CD14-positive monocyte (primary cell): ENCODE measurements at regions of chr11 and their contacts with region 1.

Region 1: GRCh38 chr11:59097113-59097708 is 9.8 kb upstream of the FAM111B start:
- DNase-seq: peak; percentile 52 to 67 (median 55)
- H3K4me3 ChIP-seq: no peak overlapping the region
- H3K4me3 Mint-ChIP-seq: no peak overlapping the region
- H3K27ac ChIP-seq: no peak overlapping the region
- H3K27ac Mint-ChIP-seq: no peak overlapping the region
- H3K4me1 ChIP-seq: peaks cover 7% of the 10 kb centered on the region in 2 donors
- H3K4me1 Mint-ChIP-seq: peaks cover 9% of the 10 kb centered on the region
- H3K27me3 ChIP-seq: no peaks in the 10 kb centered on the region
- H3K27me3 Mint-ChIP-seq: peaks cover 0 to 3% (median 1%) of the 10 kb centered on the region in 3 donors
- CTCF ChIP-seq: peak; percentile 78

Region 2: GRCh38 chr11:59158206-59159068 is 61.2 kb after region 1 on chr11:
- intact Hi-C with region 1: loop called (anchors 5 kb)
- DNase-seq: peak; percentile 72 to 86 (median 81)
- H3K4me3 ChIP-seq: peak overlapping the region in 2 of 3 experiments; percentile 57 to 58
- H3K4me3 Mint-ChIP-seq: peak overlapping the region; percentile 66 to 80
- H3K27ac ChIP-seq: peak overlapping the region in 1 of 2 donors; percentile 51
- H3K27ac Mint-ChIP-seq: peak overlapping the region; percentile 55 to 87 (median 80)
- H3K4me1 ChIP-seq: peaks cover 14 to 17% of the 10 kb centered on the region in 2 donors
- H3K4me1 Mint-ChIP-seq: peaks cover 17% of the 10 kb centered on the region
- H3K27me3 ChIP-seq: no peaks in the 10 kb centered on the region
- H3K27me3 Mint-ChIP-seq: peaks cover 0 to 2% (median 1%) of the 10 kb centered on the region in 3 donors
- CTCF ChIP-seq: peak; percentile 91

Region 3: GRCh38 chr11:59394186-59394585 is 297.0 kb after region 1 on chr11:
- intact Hi-C with region 1: no loop called
- DNase-seq: no peak
- H3K4me3 ChIP-seq: no peak overlapping the region
- H3K4me3 Mint-ChIP-seq: no peak overlapping the region
- H3K27ac ChIP-seq: no peak overlapping the region
- H3K27ac Mint-ChIP-seq: no peak overlapping the region
- H3K4me1 ChIP-seq: no peaks in the 10 kb centered on the region
- H3K4me1 Mint-ChIP-seq: no peaks in the 10 kb centered on the region
- H3K27me3 ChIP-seq: no peaks in the 10 kb centered on the region
- H3K27me3 Mint-ChIP-seq: peaks cover 0 to 1% (median 0%) of the 10 kb centered on the region in 3 donors
- CTCF ChIP-seq: no peak